Calu3 (cell line): ENCODE measurements at regions of chr2 and their contacts with region 1.

Region 1: GRCh38 chr2:64644177-64645004 is 9.3 kb downstream of the SERTAD2 start:
- DNase-seq: peak; percentile 77
- H3K4me3 Mint-ChIP-seq: peak overlapping the region; percentile 85
- H3K27ac Mint-ChIP-seq: peak overlapping the region; percentile 97
- H3K4me1 Mint-ChIP-seq: peaks cover 68% of the 10 kb centered on the region
- H3K27me3 Mint-ChIP-seq: no peaks in the 10 kb centered on the region
- CTCF ChIP-seq: no peak

Region 2: DNA sequence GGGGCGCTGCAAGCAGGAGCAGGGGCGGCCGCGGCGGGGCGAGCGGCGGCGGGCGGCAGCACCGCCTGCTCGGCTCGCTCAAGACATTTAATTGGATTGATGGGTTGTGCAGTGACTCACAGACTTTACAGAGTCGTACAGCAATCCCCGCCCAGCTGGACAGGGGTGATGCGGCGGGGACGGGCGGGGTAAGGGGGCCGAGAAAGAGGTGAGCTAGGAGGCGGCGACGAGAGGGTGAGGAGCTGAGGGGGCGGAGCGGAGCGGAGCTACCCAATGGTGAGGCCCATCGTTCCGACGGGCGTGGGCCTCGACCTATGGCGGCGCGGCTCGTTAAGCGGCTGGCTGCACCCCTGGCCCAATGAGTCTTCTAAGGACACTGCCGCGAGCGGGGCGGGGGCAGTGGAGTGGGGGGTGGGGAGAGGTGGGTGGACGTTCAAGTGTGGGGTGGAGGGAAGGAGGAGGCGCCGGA is 106.5 kb after region 1 on chr2:
- CTCF ChIA-PET with region 1: interaction called, 14 read pairs
- intact Hi-C with region 1: loop called (anchors 1 kb)
- DNase-seq: peak; percentile 98
- H3K4me3 Mint-ChIP-seq: peak overlapping the region; percentile 98
- H3K27ac Mint-ChIP-seq: peak overlapping the region; percentile 96
- H3K4me1 Mint-ChIP-seq: peaks cover 26% of the 10 kb centered on the region
- H3K27me3 Mint-ChIP-seq: no peaks in the 10 kb centered on the region
- CTCF ChIP-seq: no peak

Region 3: GRCh38 chr2:64792307-64792706 is 147.9 kb after region 1 on chr2:
- CTCF ChIA-PET with region 1: interaction called, 7 read pairs
- intact Hi-C with region 1: loop called (anchors 5 kb)
- DNase-seq: no peak
- H3K4me3 Mint-ChIP-seq: no peak overlapping the region
- H3K27ac Mint-ChIP-seq: no peak overlapping the region
- H3K4me1 Mint-ChIP-seq: peaks cover 25% of the 10 kb centered on the region
- H3K27me3 Mint-ChIP-seq: no peaks in the 10 kb centered on the region
- CTCF ChIP-seq: no peak

Region 4: GRCh38 chr2:64839844-64840243 is 195.5 kb after region 1 on chr2:
- CTCF ChIA-PET with region 1: interaction called, 18 read pairs
- intact Hi-C with region 1: loop called (anchors 10 kb)
- DNase-seq: no peak
- H3K4me3 Mint-ChIP-seq: no peak overlapping the region
- H3K27ac Mint-ChIP-seq: no peak overlapping the region
- H3K4me1 Mint-ChIP-seq: peaks cover 53% of the 10 kb centered on the region
- H3K27me3 Mint-ChIP-seq: no peaks in the 10 kb centered on the region
- CTCF ChIP-seq: no peak